Right ventricle myocardium superior (tissue), 1 donor: ENCODE measurements at regions of chr6 and their contacts with region 1.

Region 1: GRCh38 chr6:53956068-53956711 is 155.1 kb upstream of the MLIP start:
- DNase-seq: peak; percentile 68
- ATAC-seq: peak; percentile 95

Region 2: GRCh38 chr6:53565886-53566285 is 390.3 kb before region 1 on chr6:
- intact Hi-C with region 1: no loop called
- DNase-seq: no peak
- ATAC-seq: no peak

Region 3: DNA sequence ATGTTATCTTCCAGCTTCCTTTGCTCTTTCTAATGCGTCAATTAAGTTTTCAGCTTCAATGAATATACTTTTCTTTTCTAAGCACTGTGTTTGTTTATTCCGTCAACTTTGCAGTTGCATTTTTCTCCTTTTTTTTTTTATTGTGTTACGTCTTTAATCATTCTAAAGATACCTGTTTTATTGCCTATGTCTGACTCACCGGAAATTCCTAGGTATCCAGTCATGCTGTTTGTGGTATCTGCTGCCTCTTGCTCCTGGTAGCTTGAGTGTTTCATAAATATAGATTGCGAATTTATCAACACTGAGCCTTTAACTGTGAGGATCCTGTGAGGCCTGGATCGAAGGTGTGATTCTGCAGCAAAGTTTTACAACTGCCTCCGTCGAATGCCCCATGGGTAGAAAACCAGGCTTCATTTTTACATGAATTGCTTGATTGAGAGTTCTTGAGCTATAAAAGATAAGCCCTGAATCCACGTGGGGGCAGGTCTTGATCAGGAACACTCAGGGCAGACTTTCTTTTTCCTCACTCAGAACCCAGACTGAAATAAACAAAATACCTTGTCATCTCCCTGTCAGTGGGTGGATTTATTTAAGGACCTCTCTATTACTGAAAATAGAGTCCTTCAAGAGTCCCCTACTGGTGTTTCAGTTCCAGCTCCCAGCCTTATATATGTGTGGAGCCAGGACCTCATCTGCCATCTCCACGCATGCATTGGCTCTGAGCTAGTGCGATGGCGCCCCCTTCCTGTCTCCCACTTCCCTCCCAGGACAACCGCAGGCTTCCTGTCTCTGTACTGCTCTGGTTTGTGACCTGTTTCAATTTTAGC is 221.5 kb before region 1 on chr6:
- intact Hi-C with region 1: loop called (anchors 10 kb)
- DNase-seq: peak; percentile 55
- ATAC-seq: peak; percentile 71

Region 4: DNA sequence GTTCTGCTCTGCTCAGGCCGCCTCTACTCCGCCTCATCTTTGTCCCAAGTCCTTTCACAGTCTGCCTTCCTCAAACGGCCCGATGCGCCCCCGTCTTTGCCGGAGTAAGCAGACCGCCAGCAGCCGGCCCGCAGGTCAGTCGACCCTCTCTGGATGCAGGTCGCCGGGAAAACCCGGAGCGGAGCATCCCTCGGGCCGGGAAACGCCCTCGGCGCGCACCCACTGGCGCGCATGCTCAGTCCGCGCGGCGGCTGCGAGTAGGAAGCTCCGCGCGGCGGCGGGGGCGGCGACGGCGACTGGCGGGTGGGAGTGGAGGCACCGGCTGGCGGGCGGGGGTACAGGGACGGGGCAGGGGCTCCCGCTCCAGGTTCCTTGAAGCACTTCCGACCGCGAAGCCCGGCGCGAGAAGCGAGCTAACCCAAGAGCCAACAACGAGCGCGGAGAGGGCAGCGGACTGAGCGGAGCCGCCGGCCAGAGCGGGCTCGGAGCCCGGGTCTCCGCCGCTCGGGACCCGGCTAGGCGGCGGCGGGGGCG is 161.4 kb before region 1 on chr6 and contains the start of gene LRRC1:
- intact Hi-C with region 1: loop called (anchors 5 kb)
- DNase-seq: peak; percentile 95
- ATAC-seq: peak; percentile 97
- total RNA-seq, gene LRRC1: 1.8 TPM